ENCODE measurements at regions of chr22 and their contacts with region 1.

Region 1: GRCh38 chr22:32528984-32529982 is 54.7 kb downstream of the FBXO7 start:
- DNase-seq: peak; percentile 88
- ATAC-seq: peak; percentile 25
- H3K4me3 Mint-ChIP-seq: no peak overlapping the region
- H3K27ac Mint-ChIP-seq: no peak overlapping the region
- H3K4me1 Mint-ChIP-seq: peaks cover 7% of the 10 kb centered on the region
- H3K27me3 Mint-ChIP-seq: no peaks in the 10 kb centered on the region
- CTCF ChIP-seq: peak; percentile 71; the same call in 1 of the 2 replicates

Region 2: GRCh38 chr22:32628628-32629572 is 99.6 kb after region 1 on chr22:
- CTCF ChIA-PET with region 1: interaction called, 19 read pairs
- POLR2A ChIA-PET with region 1: no interaction called
- DNase-seq: no peak
- ATAC-seq: peak; percentile 41; the same call in 1 of the 2 replicates
- H3K4me3 Mint-ChIP-seq: no peak overlapping the region
- H3K27ac Mint-ChIP-seq: 0 out of 2 replicates have a peak overlapping the region, but pooled peaks have one; percentile 65
- H3K4me1 Mint-ChIP-seq: peaks cover 10% of the 10 kb centered on the region
- H3K27me3 Mint-ChIP-seq: no peaks in the 10 kb centered on the region; the same call in 1 of the 2 replicates
- CTCF ChIP-seq: no peak